Right lobe of liver (tissue), 6 donors: ENCODE measurements at regions of chr17 and their contacts with region 1.

Region 1: GRCh38 chr17:42112552-42113176 is at the start of gene DHX58:
- DNase-seq: peak; percentile 69 to 82 (median 76)
- ATAC-seq: peak; percentile 77 to 83 (median 79)
- H3K4me3 ChIP-seq: peak within 1 kb of the TSS; percentile 54 to 62 (median 59)
- H3K27ac ChIP-seq: peak within 1 kb of the TSS; percentile 65 to 83 (median 77)
- H3K4me1 ChIP-seq: peaks cover 0 to 44% (median 16%) of the 10 kb centered on the region in 4 donors
- H3K27me3 ChIP-seq: no peaks in the 10 kb centered on the region
- CTCF ChIP-seq: no peak
- POLR2A ChIP-seq: peak; percentile 49
- total RNA-seq, gene DHX58: 9.0 to 27.9 (median 19.6) TPM

Region 2: DNA sequence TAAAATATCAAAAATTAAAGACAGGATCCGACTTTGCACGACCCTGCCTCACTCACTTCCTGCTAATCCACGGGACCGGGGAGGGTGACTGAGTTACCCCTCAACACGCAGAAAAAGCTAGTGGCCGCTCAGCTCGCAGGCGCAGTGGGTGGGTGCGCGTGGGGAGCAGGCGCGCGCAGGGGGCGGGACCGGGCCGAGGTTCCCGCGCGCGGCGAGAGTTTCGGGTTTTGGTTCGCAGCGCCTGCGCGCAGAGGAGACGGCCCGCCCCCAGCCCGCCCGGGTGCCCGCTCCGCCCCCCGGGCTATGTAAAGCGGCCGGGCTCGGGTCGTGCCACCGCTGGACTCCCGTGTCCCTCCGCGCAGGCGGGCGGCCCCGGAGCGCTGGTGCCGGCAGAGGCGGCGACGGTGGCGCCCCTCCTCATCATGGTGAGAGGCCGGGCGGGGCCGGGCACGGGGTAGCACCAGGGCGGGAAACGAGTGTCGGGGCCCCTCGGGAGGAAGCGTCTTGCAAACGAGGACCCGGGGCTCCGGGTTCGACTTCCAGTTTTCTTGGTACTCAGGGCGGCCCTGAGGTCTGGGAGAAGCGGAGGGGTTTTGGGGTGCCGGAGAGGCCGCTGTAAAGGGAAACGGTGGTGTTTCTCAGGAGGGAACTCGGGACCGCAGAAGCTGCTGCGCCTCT is 146.1 kb before region 1 on chr17 and contains the start of gene CNP:
- intact Hi-C with region 1: loop called (anchors 5 kb)
- DNase-seq: peak; percentile 94
- ATAC-seq: peak; percentile 86 to 90 (median 88)
- H3K4me3 ChIP-seq: peak within 1 kb of the TSS; percentile 75 to 95 (median 78)
- H3K27ac ChIP-seq: peak within 1 kb of the TSS; percentile 74 to 88 (median 81)
- H3K4me1 ChIP-seq: peaks cover 0 to 14% (median 3%) of the 10 kb centered on the region in 4 donors
- H3K27me3 ChIP-seq: no peaks in the 10 kb centered on the region
- CTCF ChIP-seq: no peak
- POLR2A ChIP-seq: peak; percentile 91
- total RNA-seq, gene CNP: 30.1 to 42.7 (median 33.0) TPM

Region 3: DNA sequence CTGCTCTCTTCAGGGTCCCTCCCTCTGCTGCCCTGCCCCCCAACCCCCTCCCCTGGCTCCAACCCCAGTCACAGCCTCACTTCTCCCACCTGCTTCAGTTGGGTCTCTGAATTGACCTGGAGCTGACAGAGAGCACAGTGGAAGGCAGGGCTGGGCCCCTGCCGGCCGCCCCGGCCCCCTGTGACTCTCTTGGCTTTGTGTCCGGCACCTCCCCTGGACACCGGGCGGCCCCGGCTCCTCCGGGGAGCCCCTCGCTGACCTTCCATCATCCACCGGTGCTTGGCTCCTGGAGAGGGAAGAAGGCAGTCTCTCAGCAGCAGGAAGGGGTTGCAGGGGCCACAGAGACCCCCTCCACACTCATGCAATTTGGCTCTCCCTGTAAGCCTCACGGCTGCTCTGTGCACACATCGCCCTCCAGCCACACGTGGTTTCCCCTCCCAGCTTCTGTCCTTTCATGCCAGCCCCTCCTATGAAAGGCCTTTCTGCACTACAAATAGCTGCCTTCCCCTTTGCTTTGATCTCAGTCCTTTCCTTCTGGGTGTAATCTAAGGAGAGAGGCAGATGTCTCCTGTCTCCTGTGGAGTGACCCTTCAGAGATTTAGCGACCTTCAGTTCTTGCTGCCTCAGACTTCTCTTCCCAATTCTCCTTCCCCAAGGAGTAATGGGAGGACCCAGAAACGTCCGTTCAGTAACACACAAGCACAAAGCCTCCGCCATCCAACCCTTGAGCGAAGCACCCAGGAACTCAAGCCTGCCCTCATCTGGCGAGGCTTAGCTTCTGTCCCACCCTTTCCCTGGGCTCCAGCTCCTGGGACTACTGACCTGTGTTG is 84.5 kb before region 1 on chr17:
- intact Hi-C with region 1: loop called in 1 of 2 experiments (anchors 5 kb)
- DNase-seq: peak in 1 of 3 donors; percentile 53
- ATAC-seq: peak; percentile 20 to 48 (median 45)
- H3K4me3 ChIP-seq: no peak overlapping the region
- H3K27ac ChIP-seq: no peak overlapping the region
- H3K4me1 ChIP-seq: peaks cover 3 to 29% (median 14%) of the 10 kb centered on the region in 4 donors
- H3K27me3 ChIP-seq: no peaks in the 10 kb centered on the region
- CTCF ChIP-seq: peak; percentile 23 to 47 (median 38)
- POLR2A ChIP-seq: no peak

Region 4: GRCh38 chr17:42067351-42068091 is 45.1 kb before region 1 on chr17:
- intact Hi-C with region 1: loop called in 1 of 2 experiments (anchors 5 kb)
- DNase-seq: peak; percentile 59 to 72 (median 71)
- ATAC-seq: peak; percentile 72 to 84 (median 80)
- H3K4me3 ChIP-seq: no peak overlapping the region
- H3K27ac ChIP-seq: no peak overlapping the region
- H3K4me1 ChIP-seq: peaks cover 0 to 5% (median 0%) of the 10 kb centered on the region in 4 donors
- H3K27me3 ChIP-seq: peaks cover 0 to 6% of the 10 kb centered on the region in 2 donors
- CTCF ChIP-seq: peak; percentile 82 to 94 (median 89)
- POLR2A ChIP-seq: no peak

Region 5: GRCh38 chr17:42373896-42374295 is 261.2 kb after region 1 on chr17:
- intact Hi-C with region 1: no loop called
- DNase-seq: no peak
- ATAC-seq: no peak
- H3K4me3 ChIP-seq: no peak overlapping the region
- H3K27ac ChIP-seq: no peak overlapping the region
- H3K4me1 ChIP-seq: peaks cover 0 to 22% (median 6%) of the 10 kb centered on the region in 4 donors
- H3K27me3 ChIP-seq: no peaks in the 10 kb centered on the region
- CTCF ChIP-seq: no peak
- POLR2A ChIP-seq: no peak